Right lobe of liver (tissue), 6 donors: ENCODE measurements at regions of chr3 and their contacts with region 1.

Region 1: GRCh38 chr3:10344147-10344943 is 23.4 kb upstream of the SEC13 start:
- DNase-seq: peak in 1 of 3 donors; percentile 42
- ATAC-seq: peak in 3 of 4 donors; percentile 39 to 52 (median 40)
- H3K4me3 ChIP-seq: no peak overlapping the region
- H3K27ac ChIP-seq: no peak overlapping the region
- H3K4me1 ChIP-seq: no peaks in the 10 kb centered on the region
- H3K27me3 ChIP-seq: no peaks in the 10 kb centered on the region
- CTCF ChIP-seq: peak; percentile 62 to 77 (median 76)
- POLR2A ChIP-seq: no peak

Region 2: DNA sequence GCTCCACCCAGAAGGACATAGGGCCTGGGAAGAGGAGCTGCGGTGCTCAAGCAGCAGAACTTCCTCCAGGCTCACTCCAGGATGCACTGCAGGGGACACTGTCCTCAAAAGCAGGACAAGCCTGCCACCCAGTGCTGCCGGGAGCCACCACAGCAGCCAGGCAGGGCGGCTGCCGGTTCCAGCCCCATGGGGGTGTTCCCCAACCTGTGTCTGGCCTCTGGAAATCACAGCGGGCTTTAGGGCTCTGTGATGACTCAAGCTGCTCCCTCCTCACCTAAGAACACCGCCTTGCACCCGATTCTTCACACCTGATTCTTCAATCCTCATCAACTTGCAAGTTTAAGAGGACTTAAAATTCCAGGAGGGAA is 399.7 kb after region 1 on chr3:
- intact Hi-C with region 1: loop called in 1 of 2 experiments (anchors 5 kb)
- DNase-seq: no peak
- ATAC-seq: peak; percentile 36 to 46 (median 43)
- H3K4me3 ChIP-seq: no peak overlapping the region
- H3K27ac ChIP-seq: no peak overlapping the region
- H3K4me1 ChIP-seq: no peaks in the 10 kb centered on the region
- H3K27me3 ChIP-seq: peaks cover 0 to 4% of the 10 kb centered on the region in 2 donors
- CTCF ChIP-seq: no peak
- POLR2A ChIP-seq: no peak